IMR-90 (cell line): ENCODE measurements at regions of chr2 and their contacts with region 1.

Region 1: DNA sequence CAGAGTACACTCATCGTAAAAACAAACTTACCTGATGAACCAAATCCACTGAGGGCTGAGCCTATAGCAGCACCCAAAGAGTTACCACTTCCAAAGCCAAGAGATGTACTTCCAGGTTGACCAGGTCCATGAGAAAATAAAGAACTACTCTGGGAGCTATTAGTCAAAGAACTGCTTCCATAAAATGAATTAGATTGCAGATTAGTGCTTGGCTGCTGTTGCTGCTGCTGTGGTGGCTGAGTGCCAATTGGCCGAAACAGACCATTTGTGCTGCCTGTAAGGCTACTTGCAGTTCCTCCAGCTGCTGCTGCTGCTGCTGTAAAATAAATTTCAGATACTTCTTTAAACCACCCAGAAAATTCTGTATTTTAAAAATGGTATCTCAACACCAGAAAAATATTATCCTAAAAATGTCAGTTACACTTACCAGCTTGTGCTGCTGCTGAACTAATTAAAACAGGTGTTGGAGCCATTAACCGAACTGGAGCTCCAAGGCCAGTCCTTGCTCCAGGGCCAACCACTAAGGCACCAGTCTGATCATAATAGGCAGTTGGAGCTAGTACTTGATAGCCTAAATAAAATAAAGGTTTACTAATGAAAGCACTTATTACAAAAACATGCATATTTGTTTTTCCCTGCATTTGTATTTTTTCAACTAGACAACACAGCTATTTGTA is 58.1 kb upstream of the SDC1 start:
- DNase-seq: peak; percentile 33
- ATAC-seq: no peak
- H3K4me3 ChIP-seq: no peak overlapping the region
- H3K27ac ChIP-seq: no peak overlapping the region
- H3K4me1 ChIP-seq: no peaks in the 10 kb centered on the region
- H3K27me3 ChIP-seq: no peaks in the 10 kb centered on the region
- CTCF ChIP-seq: no peak
- POLR2A ChIP-seq: no peak
- RAD21 ChIP-seq: no peak

Region 2: DNA sequence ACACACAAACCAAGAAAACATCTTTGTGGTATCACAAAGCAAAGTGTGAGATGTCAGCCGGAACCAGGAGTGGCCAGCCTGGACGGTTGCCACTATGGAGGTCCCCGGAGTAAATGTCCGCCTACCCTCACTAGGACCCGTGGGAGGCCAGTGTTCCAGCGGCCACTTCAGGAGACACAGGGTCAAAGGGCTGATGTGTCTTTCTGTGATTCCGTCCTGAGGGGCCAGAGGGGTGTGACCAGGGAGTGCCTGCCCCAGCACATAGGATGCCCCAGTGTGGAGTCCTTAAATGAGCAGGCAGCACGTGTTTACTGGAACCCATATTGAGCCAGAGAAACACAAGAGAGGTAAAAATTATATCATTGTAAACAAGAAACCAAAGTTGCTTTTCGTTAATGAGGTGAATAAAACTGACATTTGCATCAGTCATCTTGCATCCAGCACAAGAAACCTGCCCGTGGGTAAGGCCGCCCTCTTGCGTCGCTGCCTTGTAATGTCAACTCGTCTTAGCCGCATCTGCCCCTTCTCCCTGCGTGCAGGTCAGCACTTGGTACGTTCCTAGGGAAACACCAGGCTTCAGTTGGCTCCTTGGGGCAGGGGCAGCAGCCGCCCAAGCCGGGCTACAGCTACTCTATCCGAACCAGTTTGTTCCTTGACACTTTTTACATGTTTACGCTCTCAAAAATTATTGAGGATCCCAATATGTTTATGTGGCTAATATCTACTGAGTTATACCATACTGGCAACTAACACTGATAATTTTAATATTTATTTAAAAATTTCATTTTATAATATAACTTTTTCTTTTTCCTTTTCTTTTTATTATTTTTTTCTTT is 185.0 kb before region 1 on chr2:
- CTCF ChIA-PET with region 1: no interaction called
- POLR2A ChIA-PET with region 1: no interaction called
- dilution Hi-C with region 1: no loop called
- in situ Hi-C with region 1: no loop called
- intact Hi-C with region 1: no loop called
- DNase-seq: peak; percentile 85
- ATAC-seq: peak; percentile 85
- H3K4me3 ChIP-seq: no peak overlapping the region
- H3K27ac ChIP-seq: no peak overlapping the region
- H3K4me1 ChIP-seq: peaks cover 18% of the 10 kb centered on the region
- H3K27me3 ChIP-seq: no peaks in the 10 kb centered on the region
- CTCF ChIP-seq: peak; percentile 96
- POLR2A ChIP-seq: peak; percentile 52; the same call in 1 of the 2 replicates
- RAD21 ChIP-seq: peak; percentile 99

Region 3: DNA sequence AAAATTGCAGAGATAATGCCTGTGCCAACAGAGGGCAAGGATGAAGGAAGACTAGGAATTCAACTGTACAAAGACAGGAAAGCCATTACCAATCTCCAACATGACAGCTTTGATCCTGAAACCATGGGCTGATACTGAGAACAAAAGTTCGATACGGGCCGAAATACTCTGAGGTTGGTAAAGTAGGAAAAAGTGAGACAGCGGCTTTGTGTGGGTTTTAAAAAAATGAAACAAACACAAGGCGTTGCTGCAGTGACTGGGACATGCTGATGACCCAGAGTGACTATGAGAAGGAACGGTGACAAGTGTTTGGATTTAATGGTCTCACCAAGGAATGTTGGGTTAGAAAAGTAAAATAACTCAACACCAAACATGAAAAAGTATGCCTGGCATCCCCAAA is 33.9 kb before region 1 on chr2:
- CTCF ChIA-PET with region 1: no interaction called
- POLR2A ChIA-PET with region 1: no interaction called
- dilution Hi-C with region 1: no loop called
- in situ Hi-C with region 1: no loop called
- intact Hi-C with region 1: loop called (anchors 2 kb)
- DNase-seq: no peak
- ATAC-seq: no peak
- H3K4me3 ChIP-seq: no peak overlapping the region
- H3K27ac ChIP-seq: no peak overlapping the region
- H3K4me1 ChIP-seq: no peaks in the 10 kb centered on the region
- H3K27me3 ChIP-seq: no peaks in the 10 kb centered on the region
- CTCF ChIP-seq: no peak
- POLR2A ChIP-seq: no peak
- RAD21 ChIP-seq: no peak